GM10248 (cell line): ENCODE measurements at regions of chr3 and their contacts with region 1.

Region 1: DNA sequence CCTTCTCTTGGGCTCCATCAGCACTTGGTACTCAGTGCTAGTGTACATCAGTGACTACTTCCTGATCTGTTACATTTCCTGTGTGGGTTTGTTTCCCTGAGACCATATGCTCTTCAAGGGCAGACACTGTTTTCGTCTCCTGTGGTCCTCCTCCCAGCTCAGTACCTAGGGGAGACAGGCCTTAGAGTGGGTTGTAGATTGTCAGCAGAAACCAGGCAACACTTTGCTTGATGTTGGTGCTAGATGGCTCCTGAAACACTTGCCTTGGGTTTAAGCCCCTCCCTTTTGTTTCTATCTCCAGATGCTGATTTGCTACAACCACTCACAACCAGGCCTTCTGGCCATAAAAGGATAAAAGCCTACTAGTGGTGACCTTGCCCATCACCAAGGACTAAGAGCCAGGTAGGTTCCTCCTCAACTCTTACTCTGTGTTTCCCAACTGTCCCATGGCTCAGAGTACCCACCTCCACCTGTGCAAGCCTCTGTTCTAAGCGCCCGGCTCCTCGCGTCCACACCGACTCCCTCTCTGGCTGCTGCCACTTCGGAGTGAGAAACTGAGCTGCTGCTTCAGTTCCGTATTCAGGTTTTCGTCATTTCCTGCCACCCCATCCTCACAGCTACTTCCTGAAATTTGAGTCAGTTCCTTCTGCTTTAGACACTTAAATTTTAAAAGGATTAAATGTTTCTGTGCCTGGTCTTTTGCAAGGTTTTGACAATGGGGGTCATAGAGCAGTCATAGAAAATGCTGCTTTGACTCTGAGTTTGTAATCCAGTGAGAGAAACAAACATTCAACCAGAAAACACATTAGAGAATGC is at the start of gene HCLS1:
- DNase-seq: peak; percentile 77
- CTCF ChIP-seq: no peak

Region 2: GRCh38 chr3:121584418-121584817 is 76.1 kb before region 1 on chr3:
- CTCF ChIA-PET with region 1: no interaction called
- POLR2A ChIA-PET with region 1: no interaction called
- DNase-seq: no peak
- CTCF ChIP-seq: no peak

Region 3: DNA sequence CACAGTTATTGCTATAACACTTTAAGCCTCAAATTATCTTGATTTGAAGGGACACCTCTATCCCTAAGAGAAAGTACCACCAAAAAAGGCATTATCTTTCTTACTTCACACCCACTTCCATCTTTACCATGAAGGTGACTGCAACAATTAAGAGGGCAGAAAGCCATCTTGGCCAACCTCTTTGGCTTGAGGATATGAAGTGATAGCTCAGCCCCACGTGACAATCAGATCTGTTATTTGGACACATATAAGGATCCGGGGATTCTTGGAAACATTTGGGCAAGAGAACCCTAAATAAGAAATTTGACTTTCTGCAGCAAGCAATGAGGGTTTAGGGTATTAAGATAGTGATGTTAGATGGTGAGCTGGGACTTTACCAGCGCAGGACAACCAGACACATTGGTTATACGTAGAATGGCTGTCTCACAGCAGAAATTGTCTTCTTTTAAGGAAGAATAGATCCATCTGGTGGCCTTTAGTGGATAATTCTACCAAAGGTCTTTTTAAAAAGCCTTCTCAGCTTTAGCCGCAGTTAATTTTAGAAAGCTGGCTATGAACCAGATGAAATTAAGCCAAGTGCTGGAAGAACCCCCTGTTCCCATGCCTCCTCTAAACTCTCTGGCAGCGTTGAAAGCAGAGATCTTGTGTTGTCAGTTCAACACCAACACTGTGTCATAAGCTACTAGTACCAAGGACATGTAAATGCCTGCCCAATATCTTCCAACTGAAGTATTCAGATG is 12.2 kb before region 1 on chr3:
- CTCF ChIA-PET with region 1: no interaction called
- POLR2A ChIA-PET with region 1: no interaction called
- DNase-seq: no peak
- CTCF ChIP-seq: no peak

Region 4: GRCh38 chr3:121670676-121671075 is 10.1 kb after region 1 on chr3:
- CTCF ChIA-PET with region 1: interaction called, 12 read pairs
- POLR2A ChIA-PET with region 1: no interaction called
- DNase-seq: no peak
- CTCF ChIP-seq: no peak